ENCODE measurements at regions of chr11 and their contacts with region 1.

Region 1: DNA sequence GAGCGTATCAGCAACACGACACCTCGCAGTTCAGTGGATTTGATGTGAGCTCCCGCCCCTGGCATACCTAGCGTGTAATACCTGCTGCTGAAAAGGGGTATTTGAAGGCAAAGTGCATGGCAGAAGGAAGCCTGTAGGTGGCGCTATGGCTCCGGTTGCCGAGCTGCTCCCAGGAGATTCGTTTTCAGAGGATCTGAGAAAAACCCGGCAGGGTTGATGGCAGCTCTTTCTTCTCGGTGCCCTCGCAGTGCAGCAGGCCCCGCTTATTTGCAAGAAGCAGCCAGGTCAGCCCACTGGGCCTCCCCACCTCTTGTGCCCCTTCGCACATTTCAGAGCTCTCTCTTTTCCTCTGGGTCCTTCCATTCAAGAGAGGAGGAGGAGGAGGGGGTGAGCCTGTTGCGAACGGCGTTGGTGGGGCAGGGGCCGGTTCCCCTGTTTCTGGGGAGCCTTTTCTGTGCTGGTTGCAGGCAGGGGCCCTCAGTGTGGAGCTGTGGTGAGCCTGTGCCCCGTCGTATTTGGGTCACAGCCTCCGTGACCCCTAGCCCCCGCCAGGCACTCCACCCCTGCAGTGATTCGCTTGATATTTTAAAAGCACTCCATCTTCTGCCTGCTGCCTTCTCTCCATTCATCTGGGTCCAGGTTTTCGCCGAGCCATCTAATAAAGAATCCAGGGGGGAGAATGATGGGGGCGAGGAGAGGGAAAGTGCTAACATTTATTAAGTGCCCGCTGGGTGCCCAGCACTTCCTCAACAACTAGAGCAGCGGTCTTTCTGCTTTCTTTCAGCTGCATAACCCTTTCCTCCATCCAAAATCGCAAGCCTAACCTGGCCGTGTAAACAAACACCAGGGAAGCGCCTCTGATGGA is 85.3 kb upstream of the SYT13 start:
- DNase-seq: peak; percentile 66
- H3K4me3 Mint-ChIP-seq: no peak overlapping the region
- H3K27ac Mint-ChIP-seq: no peak overlapping the region
- H3K4me1 Mint-ChIP-seq: no peaks in the 10 kb centered on the region
- H3K27me3 Mint-ChIP-seq: peaks cover 35% of the 10 kb centered on the region
- CTCF ChIP-seq: peak; percentile 94

Region 2: DNA sequence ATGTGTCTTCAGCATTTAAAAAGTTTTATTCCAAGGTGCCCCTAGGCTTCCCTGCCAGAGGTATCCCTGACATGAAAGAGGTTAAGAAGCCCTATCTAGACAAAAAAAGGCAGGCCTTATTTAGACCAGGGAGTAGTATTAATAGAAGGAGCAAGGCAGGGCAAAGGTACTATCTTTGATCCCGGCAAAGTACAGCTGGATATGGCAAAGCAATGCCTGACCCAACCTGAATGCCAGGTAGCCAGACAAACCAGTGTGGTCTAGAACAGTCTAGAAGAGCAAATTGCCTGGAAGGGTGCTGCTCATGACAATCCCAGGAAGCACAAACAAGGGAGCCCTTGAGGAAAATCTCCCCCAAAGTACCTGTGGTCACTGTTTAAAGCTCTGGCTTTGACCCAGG is 22.8 kb before region 1 on chr11:
- CTCF ChIA-PET with region 1: interaction called, 12 read pairs
- POLR2A ChIA-PET with region 1: no interaction called
- intact Hi-C with region 1: no loop called
- DNase-seq: no peak
- H3K4me3 Mint-ChIP-seq: no peak overlapping the region
- H3K27ac Mint-ChIP-seq: no peak overlapping the region
- H3K4me1 Mint-ChIP-seq: no peaks in the 10 kb centered on the region
- H3K27me3 Mint-ChIP-seq: peaks cover 72% of the 10 kb centered on the region
- CTCF ChIP-seq: no peak

Region 3: DNA sequence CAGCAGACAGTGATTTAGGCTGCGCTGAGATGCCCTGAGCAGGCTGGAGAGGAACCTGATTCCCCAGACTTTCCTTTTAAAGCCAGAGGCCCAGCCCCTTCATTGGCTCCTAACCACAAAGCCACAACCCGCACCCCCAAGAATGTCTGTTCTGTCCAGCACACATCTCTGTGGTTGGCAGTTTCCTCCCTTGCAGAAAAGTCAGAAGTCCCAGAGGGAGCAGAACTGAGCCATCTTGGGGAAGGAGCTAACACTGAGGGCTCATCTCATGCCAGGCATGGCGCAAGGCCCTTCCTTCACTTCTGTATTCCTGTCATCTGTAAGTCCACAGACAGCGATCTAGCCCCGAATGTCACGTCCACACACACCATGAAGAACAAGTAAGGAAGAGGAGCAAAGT is 11.7 kb after region 1 on chr11:
- CTCF ChIA-PET with region 1: interaction called, 23 read pairs
- POLR2A ChIA-PET with region 1: interaction called, 3 read pairs
- intact Hi-C with region 1: no loop called
- DNase-seq: peak; percentile 26
- H3K4me3 Mint-ChIP-seq: no peak overlapping the region
- H3K27ac Mint-ChIP-seq: no peak overlapping the region
- H3K4me1 Mint-ChIP-seq: no peaks in the 10 kb centered on the region
- H3K27me3 Mint-ChIP-seq: peaks cover 54% of the 10 kb centered on the region
- CTCF ChIP-seq: no peak